BJ (cell line): ENCODE measurements at regions of chr10 and their contacts with region 1.

Region 1: GRCh38 chr10:110893559-110894179 is 21.9 kb downstream of the PDCD4 start:
- DNase-seq: no peak
- H3K4me3 ChIP-seq: no peak overlapping the region
- H3K27me3 ChIP-seq: no peaks in the 10 kb centered on the region
- CTCF ChIP-seq: peak; percentile 48

Region 2: GRCh38 chr10:110746254-110746826 is 147.3 kb before region 1 on chr10:
- CTCF ChIA-PET with region 1: interaction called, 21 read pairs
- POLR2A ChIA-PET with region 1: no interaction called
- DNase-seq: peak; percentile 17
- H3K4me3 ChIP-seq: no peak overlapping the region
- H3K27me3 ChIP-seq: peaks cover 7% of the 10 kb centered on the region
- CTCF ChIP-seq: peak; percentile 74

Region 3: DNA sequence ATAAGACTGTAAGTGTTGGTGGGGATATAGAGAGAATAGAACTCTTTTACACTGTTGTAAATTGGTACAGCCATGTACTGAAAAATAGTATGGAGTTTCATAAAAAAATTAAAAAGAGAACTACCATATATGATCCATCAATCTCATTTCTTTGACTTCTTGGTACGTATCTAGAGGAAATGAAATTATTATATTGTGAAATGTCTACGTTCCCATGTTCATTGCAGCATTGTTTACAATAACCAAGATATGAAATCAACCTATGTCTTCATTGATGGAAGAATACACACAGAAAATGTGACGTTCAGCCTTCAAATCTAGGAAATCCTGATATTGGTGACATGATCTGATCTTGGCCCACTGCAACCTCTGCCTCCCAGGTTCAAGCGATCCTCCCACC is 57.7 kb after region 1 on chr10:
- CTCF ChIA-PET with region 1: no interaction called
- POLR2A ChIA-PET with region 1: no interaction called
- DNase-seq: no peak
- H3K4me3 ChIP-seq: no peak overlapping the region
- H3K27me3 ChIP-seq: no peaks in the 10 kb centered on the region
- CTCF ChIP-seq: no peak